ENCODE measurements at regions of chr6 and their contacts with region 1.

Region 1: DNA sequence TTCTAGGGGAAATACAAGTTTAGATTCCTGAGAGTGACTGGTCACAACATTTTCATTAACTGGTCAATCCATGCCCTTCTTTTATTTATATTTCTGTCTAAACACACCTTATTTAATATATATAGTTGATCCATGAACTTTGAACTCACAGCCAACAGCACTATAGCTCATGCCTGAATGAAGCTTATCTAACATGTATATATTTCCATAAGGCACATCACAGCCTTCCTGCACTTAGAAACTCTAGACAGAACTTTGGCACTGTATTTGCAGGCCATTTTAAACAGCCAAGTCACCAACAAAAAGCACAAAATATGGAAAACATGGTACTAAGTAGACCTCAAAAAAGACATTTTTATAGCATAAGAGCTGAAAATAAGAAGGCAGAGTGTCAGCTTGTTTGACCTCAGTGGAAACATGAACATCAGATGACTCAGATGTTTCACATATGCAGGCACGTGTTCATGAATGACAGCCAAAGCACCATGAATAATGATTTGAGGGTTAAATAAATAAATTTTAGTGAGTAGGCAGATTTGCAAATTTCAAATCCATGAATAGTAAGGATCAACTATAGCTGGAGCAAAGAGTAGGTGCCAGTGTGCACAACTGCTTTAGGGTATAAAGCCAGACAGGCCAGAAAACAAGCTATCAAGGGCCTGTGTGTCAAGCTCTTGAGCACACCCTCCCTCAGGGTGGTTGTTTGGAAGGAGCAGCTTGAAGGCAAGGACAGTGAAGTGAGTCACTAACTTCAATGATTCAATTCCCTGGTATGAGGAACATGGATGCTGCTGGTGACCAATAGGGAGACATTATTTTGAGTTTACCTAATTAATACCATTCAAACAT is 88.9 kb upstream of the NT5E start:
- DNase-seq: peak; percentile 98
- ATAC-seq: peak; percentile 94
- H3K4me3 ChIP-seq: no peak overlapping the region
- H3K27ac ChIP-seq: peak overlapping the region; percentile 14
- H3K4me1 ChIP-seq: peaks cover 16% of the 10 kb centered on the region
- H3K27me3 ChIP-seq: no peaks in the 10 kb centered on the region
- CTCF ChIP-seq: no peak
- POLR2A ChIP-seq: no peak
- RAD21 ChIP-seq: peak; percentile 26; the same call in 1 of the 2 replicates

Region 2: GRCh38 chr6:85323435-85324040 is 37.5 kb before region 1 on chr6:
- CTCF ChIA-PET with region 1: no interaction called
- POLR2A ChIA-PET with region 1: no interaction called
- dilution Hi-C with region 1: no loop called
- in situ Hi-C with region 1: no loop called
- intact Hi-C with region 1: no loop called
- DNase-seq: peak; percentile 77
- ATAC-seq: peak; percentile 89
- H3K4me3 ChIP-seq: no peak overlapping the region
- H3K27ac ChIP-seq: no peak overlapping the region
- H3K4me1 ChIP-seq: no peaks in the 10 kb centered on the region
- H3K27me3 ChIP-seq: peaks cover 11% of the 10 kb centered on the region
- CTCF ChIP-seq: peak; percentile 89
- POLR2A ChIP-seq: no peak
- RAD21 ChIP-seq: peak; percentile 83

Region 3: DNA sequence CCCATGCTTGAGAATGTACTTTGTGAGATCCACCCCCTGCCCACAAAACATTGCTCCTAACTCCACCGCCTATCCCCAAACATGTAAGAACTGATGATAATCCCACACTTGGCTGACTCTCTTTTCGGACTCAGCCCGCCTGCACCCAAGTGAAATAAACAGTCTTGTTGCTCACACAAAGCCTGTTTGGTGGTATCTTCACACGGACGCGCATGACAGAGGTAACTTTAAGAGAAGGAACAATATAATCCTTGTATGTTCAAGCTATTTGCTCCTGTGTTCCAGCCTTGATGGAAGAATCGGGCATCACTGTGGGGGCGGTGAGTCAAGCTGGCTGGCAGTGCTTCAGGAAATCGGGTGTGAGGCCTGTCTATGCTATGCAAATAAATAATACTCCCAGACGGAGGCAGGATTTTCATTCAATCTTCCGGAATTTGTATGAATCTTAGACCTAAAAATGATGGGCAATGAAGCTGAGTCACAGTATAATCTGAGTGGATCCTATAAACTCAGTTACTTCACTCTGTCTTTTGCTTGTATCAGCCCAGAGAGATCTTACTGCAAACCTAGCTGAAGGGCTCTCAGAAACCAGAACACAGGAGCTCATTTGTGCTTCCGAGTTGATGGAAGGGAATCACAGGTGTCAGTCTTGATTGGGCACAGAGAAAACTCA is 43.6 kb after region 1 on chr6:
- CTCF ChIA-PET with region 1: no interaction called
- POLR2A ChIA-PET with region 1: interaction called, 3 read pairs
- dilution Hi-C with region 1: no loop called
- in situ Hi-C with region 1: loop called (anchors 5 kb)
- intact Hi-C with region 1: loop called (anchors 1 kb)
- DNase-seq: peak; percentile 95
- ATAC-seq: peak; percentile 63
- H3K4me3 ChIP-seq: no peak overlapping the region; the same call in 1 of the 2 replicates
- H3K27ac ChIP-seq: peak overlapping the region; percentile 95
- H3K4me1 ChIP-seq: peaks cover 44% of the 10 kb centered on the region
- H3K27me3 ChIP-seq: no peaks in the 10 kb centered on the region
- CTCF ChIP-seq: no peak
- POLR2A ChIP-seq: peak; percentile 60; the same call in 1 of the 2 replicates
- RAD21 ChIP-seq: no peak; the same call in 1 of the 2 replicates

Region 4: GRCh38 chr6:85593438-85594196 is 232.6 kb after region 1 on chr6 and contains the start of gene SNX14:
- CTCF ChIA-PET with region 1: no interaction called
- POLR2A ChIA-PET with region 1: no interaction called
- dilution Hi-C with region 1: no loop called
- in situ Hi-C with region 1: no loop called
- intact Hi-C with region 1: loop called (anchors 5 kb)
- DNase-seq: peak; percentile 94
- ATAC-seq: peak; percentile 94
- H3K4me3 ChIP-seq: peak within 1 kb of the TSS; percentile 84
- H3K27ac ChIP-seq: peak within 1 kb of the TSS; percentile 92
- H3K4me1 ChIP-seq: peaks cover 2% of the 10 kb centered on the region; the same call in 1 of the 2 replicates
- H3K27me3 ChIP-seq: no peaks in the 10 kb centered on the region
- CTCF ChIP-seq: peak; percentile 10; the same call in 1 of the 2 replicates
- POLR2A ChIP-seq: peak; percentile 87
- RAD21 ChIP-seq: peak; percentile 6; the same call in 1 of the 2 replicates
- total RNA-seq, gene SNX14: 61.8 and 116 TPM in 2 replicates

Measured in IMR-90 (cell line).